ENCODE measurements at regions of chr14 and their contacts with region 1.

Region 1: DNA sequence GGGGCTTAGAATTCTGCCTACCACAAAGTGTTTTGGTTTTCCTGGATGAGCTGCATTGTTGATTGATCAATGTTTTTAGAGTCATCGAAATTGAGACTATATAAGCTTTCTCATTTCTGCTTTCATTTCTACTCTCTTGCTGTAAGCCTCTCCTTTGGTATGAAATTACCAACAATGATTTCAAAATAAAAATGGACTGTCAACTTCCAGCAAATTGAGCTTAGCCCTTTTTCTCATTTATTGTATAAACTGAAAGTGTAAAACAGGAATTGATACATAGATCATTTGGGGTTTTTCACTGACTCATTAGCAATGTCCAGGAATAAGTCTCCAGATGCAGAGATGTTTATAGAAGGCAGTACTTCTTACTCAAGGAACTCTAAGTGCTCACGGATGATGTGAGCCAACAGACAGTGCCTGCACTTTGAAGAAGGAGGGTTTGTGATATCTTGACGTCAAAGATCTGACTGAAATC is 20.0 kb upstream of the PCNX1 start:
- DNase-seq: no peak
- ATAC-seq: peak; percentile 21
- H3K4me3 Mint-ChIP-seq: peak overlapping the region; percentile 65
- H3K27ac Mint-ChIP-seq: peak overlapping the region; percentile 96
- H3K4me1 Mint-ChIP-seq: peaks cover 87% of the 10 kb centered on the region
- H3K27me3 Mint-ChIP-seq: no peaks in the 10 kb centered on the region

Region 2: GRCh38 chr14:70789361-70789760 is 97.9 kb before region 1 on chr14:
- CTCF ChIA-PET with region 1: no interaction called
- DNase-seq: no peak
- ATAC-seq: no peak
- H3K4me3 Mint-ChIP-seq: no peak overlapping the region
- H3K27ac Mint-ChIP-seq: no peak overlapping the region
- H3K4me1 Mint-ChIP-seq: no peaks in the 10 kb centered on the region
- H3K27me3 Mint-ChIP-seq: no peaks in the 10 kb centered on the region

Region 3: DNA sequence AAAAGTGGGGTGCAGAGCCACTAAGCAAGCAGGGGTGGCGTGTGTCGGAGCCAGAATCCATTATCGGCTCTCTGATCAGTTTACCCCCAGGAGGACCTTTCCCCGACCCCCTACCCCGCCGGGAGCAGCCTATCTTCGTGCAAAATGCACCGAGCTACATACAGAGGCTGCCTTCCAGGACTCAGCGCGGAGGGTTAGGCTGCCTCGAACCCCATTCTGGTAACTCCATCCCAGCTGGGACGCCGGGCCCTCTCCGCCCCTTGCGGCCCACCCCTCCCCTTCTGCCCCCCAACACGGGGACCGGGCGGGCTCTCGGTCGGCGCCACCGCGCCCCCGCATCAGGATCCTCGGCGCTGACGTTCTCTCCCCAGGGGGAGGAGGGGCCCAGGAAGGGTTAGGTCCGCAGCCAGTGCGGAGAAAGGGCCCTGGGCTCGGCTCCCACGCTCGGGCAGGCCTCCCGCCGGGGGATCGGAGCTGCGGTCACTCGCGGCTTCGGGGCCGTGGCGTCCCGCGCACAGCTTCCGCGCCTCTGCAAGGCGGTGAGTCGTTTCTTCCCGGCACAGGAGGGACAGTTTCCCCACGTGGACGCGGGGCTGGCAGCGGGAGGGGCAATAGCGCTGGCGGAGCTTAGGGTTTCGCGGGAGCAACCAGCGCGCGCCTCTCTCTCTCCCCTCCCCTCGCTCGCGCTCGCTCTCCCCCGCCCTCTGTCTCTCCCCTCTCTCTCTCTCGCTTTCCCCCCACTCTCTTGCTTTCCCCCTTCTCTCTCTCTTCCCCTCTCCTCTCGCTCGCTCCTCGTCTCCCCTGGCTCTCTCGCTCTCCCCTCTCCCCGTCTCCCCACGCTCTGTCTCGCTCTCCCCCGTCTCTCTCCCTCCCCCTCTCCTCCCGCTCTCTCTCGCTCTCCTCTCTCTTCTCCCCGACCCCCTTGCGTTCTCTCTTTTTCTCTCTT is 65.4 kb before region 1 on chr14:
- CTCF ChIA-PET with region 1: interaction called, 85 read pairs
- DNase-seq: peak; percentile 62
- ATAC-seq: peak; percentile 65
- H3K4me3 Mint-ChIP-seq: peak overlapping the region; percentile 71
- H3K27ac Mint-ChIP-seq: peak overlapping the region; percentile 24
- H3K4me1 Mint-ChIP-seq: peaks cover 28% of the 10 kb centered on the region
- H3K27me3 Mint-ChIP-seq: peaks cover 25% of the 10 kb centered on the region

Region 4: DNA sequence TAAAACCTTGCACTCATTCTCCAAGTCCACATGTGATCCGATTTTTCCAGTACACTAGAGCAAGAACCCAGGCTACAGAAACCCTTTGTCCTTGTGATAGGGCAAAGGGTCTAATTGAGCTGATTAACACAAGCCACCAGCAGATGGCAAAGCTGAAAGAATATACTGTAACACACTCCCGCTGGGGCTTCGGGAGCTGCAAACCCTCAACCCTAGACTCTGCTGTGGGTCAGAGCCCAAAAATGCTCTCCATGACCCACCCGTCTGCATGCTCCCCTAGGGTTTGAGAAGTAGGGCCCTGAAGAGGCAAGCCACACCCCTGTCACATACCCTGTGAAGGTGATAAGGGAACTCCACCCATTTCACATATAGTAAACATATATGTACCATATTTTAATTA is 13.6 kb before region 1 on chr14:
- CTCF ChIA-PET with region 1: interaction called, 64 read pairs
- DNase-seq: peak; percentile 53
- ATAC-seq: no peak
- H3K4me3 Mint-ChIP-seq: no peak overlapping the region
- H3K27ac Mint-ChIP-seq: peak overlapping the region; percentile 58
- H3K4me1 Mint-ChIP-seq: peaks cover 26% of the 10 kb centered on the region
- H3K27me3 Mint-ChIP-seq: no peaks in the 10 kb centered on the region

Region 5: GRCh38 chr14:70897464-70897863 is 10.2 kb after region 1 on chr14:
- CTCF ChIA-PET with region 1: interaction called, 20 read pairs
- DNase-seq: no peak
- ATAC-seq: no peak
- H3K4me3 Mint-ChIP-seq: no peak overlapping the region
- H3K27ac Mint-ChIP-seq: no peak overlapping the region
- H3K4me1 Mint-ChIP-seq: peaks cover 65% of the 10 kb centered on the region
- H3K27me3 Mint-ChIP-seq: peaks cover 5% of the 10 kb centered on the region

Region 6: DNA sequence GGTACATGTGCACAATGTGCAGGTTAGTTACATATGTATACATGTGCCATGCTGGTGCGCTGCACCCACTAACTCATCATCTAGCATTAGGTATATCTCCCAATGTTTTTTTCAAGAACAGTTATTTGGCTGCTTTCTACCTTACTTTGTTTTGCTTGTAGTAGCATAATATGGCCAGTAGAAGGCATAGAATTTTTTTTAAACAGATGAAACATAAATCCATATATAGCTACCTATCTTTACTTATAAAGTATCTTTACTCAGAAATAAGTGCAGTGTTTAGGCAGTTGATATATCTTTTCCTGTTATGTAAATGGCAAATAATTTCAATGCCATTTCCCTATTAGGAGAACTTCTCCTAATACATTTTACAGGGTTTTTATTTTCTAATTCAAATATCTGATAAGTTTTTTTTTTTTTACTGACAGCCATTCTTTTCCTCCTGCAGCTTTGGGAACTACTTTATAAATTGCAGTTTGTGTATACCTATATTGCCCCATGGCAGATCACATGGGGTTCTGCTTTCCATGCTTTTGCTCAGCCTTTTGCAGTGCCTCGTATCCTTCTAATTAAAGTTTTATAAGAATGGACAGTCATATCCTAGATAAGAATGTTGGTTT is 163.1 kb after region 1 on chr14:
- CTCF ChIA-PET with region 1: no interaction called
- DNase-seq: no peak
- ATAC-seq: no peak
- H3K4me3 Mint-ChIP-seq: no peak overlapping the region
- H3K27ac Mint-ChIP-seq: no peak overlapping the region
- H3K4me1 Mint-ChIP-seq: no peaks in the 10 kb centered on the region
- H3K27me3 Mint-ChIP-seq: no peaks in the 10 kb centered on the region

Measured in activated CD8-positive, alpha-beta memory T cell treated with anti-CD3 and anti-CD28 coated beads, Interleukin-2, amount 10 ng/mL, durations not matched to agents 7 days and 5 days (primary cell).